CD4-positive, alpha-beta memory T cell (primary cell): ENCODE measurements at regions of chr4 and their contacts with region 1.

Region 1: DNA sequence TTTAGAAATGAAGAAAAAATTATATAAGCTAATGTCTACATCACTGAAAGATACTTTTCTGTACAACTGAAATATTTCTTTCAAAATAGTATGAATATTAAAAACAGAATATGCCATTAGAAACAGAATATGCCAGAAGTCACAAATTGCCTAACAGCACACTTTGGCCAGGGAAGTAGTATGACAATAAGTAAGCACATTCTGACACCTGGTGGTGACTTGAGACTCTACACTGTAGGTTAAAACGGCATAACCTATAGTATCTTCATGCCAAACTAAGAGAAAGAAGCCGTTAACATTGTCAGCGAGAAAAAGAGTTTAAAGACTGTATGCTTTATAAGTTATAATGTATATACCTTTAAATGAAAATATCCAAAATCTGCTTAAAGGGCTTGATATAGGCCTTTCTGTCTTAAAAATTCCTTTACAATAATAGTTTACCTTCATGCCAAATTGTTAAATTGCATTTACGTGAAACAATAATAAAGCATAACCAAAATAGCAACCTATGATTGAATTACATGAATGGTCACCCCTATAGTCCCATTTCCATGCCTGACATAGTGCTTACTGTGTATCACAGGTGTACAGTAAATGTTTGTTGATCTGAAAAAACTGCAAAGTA is 32.8 kb downstream of the FAM13A start:
- DNase-seq: peak; percentile 69 to 75 (median 73)
- H3K4me3 ChIP-seq: no peak overlapping the region
- H3K4me3 Mint-ChIP-seq: no peak overlapping the region
- H3K27ac ChIP-seq: no peak overlapping the region
- H3K27ac Mint-ChIP-seq: peak overlapping the region in 1 of 7 donors; percentile 39
- H3K4me1 ChIP-seq: no peaks in the 10 kb centered on the region
- H3K4me1 Mint-ChIP-seq: peaks cover 0 to 7% (median under 1%) of the 10 kb centered on the region in 4 donors
- H3K27me3 ChIP-seq: no peaks in the 10 kb centered on the region
- H3K27me3 Mint-ChIP-seq: no peaks in the 10 kb centered on the region

Region 2: DNA sequence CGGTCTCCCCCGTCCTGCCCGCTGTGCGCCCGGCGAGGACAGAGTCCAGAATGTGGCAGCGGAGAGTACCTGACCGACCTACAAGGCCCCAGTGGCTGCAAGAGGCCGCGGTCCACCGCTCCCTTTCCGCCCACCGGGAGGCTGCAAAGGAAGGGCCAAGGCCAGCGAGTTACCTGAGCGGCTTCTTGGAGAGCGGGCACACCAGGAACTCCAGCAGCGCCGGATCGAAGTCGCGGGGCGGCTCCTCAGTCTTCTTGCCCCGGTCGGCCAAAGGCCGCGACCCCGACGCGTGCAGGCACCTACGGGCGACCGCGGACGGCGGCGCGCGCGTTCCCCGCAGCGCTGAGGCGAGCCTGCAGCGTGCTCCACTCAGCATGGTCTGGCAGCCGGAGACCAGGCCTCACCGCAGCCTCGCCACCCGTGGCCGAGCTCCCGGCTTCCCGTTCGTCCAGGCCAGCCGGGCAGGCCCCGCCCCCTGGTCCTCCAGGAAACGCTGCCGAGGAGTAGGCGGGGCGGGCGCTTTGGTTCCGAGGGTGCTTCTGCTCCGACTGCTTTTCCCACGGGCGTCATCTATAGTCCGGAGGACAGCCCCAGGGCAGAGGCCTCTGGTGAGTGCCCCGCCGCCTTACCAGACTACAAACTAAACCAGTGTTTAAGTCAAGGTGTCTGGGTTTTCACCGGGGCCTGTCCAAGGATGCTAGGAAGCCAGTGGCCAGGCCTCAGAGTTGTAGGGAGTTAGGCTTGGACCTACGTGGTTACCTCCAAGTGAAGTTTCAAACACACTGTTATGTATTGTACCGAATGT is 500.6 kb before region 1 on chr4 and contains the start of gene PYURF:
- CTCF ChIA-PET with region 1: interaction called, 41 read pairs
- POLR2A ChIA-PET with region 1: no interaction called
- intact Hi-C with region 1: loop called (anchors 1 kb)
- DNase-seq: peak; percentile 60 to 73 (median 64)
- H3K4me3 ChIP-seq: peak within 1 kb of the TSS; percentile 62 to 69
- H3K4me3 Mint-ChIP-seq: peak within 1 kb of the TSS; percentile 91 to 97 (median 94)
- H3K27ac ChIP-seq: peak within 1 kb of the TSS; percentile 60
- H3K27ac Mint-ChIP-seq: peak within 1 kb of the TSS; percentile 89 to 96 (median 93)
- H3K4me1 ChIP-seq: peaks cover 17% of the 10 kb centered on the region
- H3K4me1 Mint-ChIP-seq: peaks cover 22 to 46% (median 32%) of the 10 kb centered on the region in 4 donors
- H3K27me3 ChIP-seq: no peaks in the 10 kb centered on the region
- H3K27me3 Mint-ChIP-seq: no peaks in the 10 kb centered on the region
- total RNA-seq, gene PYURF: 54.5 to 60.4 TPM

Region 3: GRCh38 chr4:88528861-88529260 is 495.3 kb before region 1 on chr4:
- CTCF ChIA-PET with region 1: interaction called, 41 read pairs
- POLR2A ChIA-PET with region 1: no interaction called
- intact Hi-C with region 1: loop called (anchors 1 kb)
- DNase-seq: no peak
- H3K4me3 ChIP-seq: no peak overlapping the region
- H3K4me3 Mint-ChIP-seq: no peak overlapping the region
- H3K27ac ChIP-seq: no peak overlapping the region
- H3K27ac Mint-ChIP-seq: no peak overlapping the region
- H3K4me1 ChIP-seq: peaks cover 4% of the 10 kb centered on the region
- H3K4me1 Mint-ChIP-seq: peaks cover 5 to 23% (median 15%) of the 10 kb centered on the region in 4 donors
- H3K27me3 ChIP-seq: no peaks in the 10 kb centered on the region
- H3K27me3 Mint-ChIP-seq: no peaks in the 10 kb centered on the region

Region 4: DNA sequence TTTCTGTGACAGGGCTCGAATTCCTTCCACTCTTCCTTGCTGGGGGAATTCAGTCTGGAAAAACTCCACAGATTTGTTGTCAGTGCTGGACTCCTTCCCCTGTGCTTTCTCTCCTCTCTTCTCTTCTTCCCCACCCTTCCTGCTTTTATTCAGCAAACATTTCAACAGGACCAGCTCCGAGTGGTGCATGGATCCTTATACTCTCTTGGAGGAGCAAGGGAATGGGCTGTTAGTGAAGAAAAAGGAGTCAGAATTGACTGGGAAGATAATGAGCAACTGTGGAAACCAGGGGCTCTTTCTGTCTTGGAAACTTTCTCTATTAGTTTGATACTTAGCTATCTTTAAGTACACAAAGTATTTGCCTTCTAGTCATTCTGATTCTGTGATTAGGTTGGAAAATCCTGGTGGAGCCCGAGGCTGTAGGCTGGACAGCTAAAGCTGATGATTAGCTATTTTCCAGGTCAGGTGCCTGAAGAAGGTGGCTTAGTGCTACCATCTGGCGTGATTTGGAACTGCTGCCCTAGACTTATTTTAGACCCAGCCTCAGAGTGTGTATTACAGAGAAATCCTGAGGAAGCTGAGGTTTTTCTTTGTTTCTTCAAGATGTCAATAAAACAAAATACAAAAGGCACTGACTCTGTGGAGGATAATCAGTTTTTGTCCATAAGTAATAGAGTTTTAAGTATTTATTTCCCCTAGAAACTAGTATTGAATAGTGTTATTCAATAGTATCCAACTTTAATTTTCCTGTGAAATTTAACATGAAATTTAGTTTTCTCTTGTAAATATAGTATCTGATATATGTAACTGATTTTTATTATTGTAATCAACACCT is 364.9 kb before region 1 on chr4:
- CTCF ChIA-PET with region 1: interaction called, 3 read pairs
- POLR2A ChIA-PET with region 1: no interaction called
- intact Hi-C with region 1: loop called (anchors 5 kb)
- DNase-seq: peak; percentile 32 to 47 (median 41)
- H3K4me3 ChIP-seq: no peak overlapping the region
- H3K4me3 Mint-ChIP-seq: no peak overlapping the region
- H3K27ac ChIP-seq: no peak overlapping the region
- H3K27ac Mint-ChIP-seq: peak overlapping the region in 5 of 7 donors; percentile 2 to 71 (median 55)
- H3K4me1 ChIP-seq: peaks cover 5% of the 10 kb centered on the region
- H3K4me1 Mint-ChIP-seq: peaks cover 6 to 18% (median 9%) of the 10 kb centered on the region in 4 donors
- H3K27me3 ChIP-seq: no peaks in the 10 kb centered on the region
- H3K27me3 Mint-ChIP-seq: no peaks in the 10 kb centered on the region

Region 5: DNA sequence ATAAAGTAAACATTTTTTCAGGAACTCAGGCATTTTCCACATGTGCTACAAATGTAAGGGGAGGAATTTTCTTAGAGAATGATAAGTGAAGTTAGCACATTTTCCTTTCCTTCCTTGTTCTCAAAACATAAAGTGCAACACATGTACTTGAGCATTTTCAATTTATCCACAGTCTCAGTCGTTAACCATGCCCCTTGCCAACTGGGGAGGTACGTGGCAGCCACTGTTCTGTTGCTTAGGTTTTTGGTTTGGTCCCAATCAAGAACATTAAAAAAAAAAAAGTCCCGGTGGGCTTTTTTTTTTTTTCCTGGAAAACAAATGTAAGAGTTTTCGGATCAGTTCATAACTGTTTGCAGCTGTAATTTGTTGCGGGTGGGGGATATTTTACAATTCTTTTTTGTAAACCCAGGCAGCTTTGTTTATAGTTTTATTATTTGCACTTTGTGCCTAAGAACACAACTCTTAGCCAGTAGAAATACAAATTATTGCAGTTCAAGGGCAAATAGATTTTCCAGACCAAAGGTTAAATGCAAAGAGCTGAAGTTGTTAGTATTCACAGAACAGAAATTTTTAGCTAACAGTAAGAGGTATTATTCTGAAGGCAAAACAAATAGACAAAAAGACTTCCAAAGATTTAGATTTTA is 214.5 kb before region 1 on chr4:
- CTCF ChIA-PET with region 1: interaction called, 394 read pairs
- POLR2A ChIA-PET with region 1: no interaction called
- intact Hi-C with region 1: no loop called
- DNase-seq: no peak
- H3K4me3 ChIP-seq: no peak overlapping the region
- H3K4me3 Mint-ChIP-seq: peak overlapping the region in 1 of 8 donors; percentile 9
- H3K27ac ChIP-seq: no peak overlapping the region
- H3K27ac Mint-ChIP-seq: peak overlapping the region in 1 of 7 donors; percentile 14
- H3K4me1 ChIP-seq: no peaks in the 10 kb centered on the region
- H3K4me1 Mint-ChIP-seq: peaks cover 0 to 15% (median under 1%) of the 10 kb centered on the region in 4 donors
- H3K27me3 ChIP-seq: no peaks in the 10 kb centered on the region
- H3K27me3 Mint-ChIP-seq: no peaks in the 10 kb centered on the region

Region 6: GRCh38 chr4:88828842-88829571 is 195.2 kb before region 1 on chr4:
- CTCF ChIA-PET with region 1: interaction called, 18 read pairs
- POLR2A ChIA-PET with region 1: interaction called, 6 read pairs
- intact Hi-C with region 1: no loop called
- DNase-seq: no peak
- H3K4me3 ChIP-seq: no peak overlapping the region
- H3K4me3 Mint-ChIP-seq: no peak overlapping the region
- H3K27ac ChIP-seq: no peak overlapping the region
- H3K27ac Mint-ChIP-seq: no peak overlapping the region
- H3K4me1 ChIP-seq: peaks cover 4% of the 10 kb centered on the region
- H3K4me1 Mint-ChIP-seq: peaks cover 0 to 1% (median 0%) of the 10 kb centered on the region in 4 donors
- H3K27me3 ChIP-seq: no peaks in the 10 kb centered on the region
- H3K27me3 Mint-ChIP-seq: peaks cover 0 to 2% of the 10 kb centered on the region in 2 donors

Region 7: GRCh38 chr4:89039730-89040338 is 15.7 kb after region 1 on chr4:
- CTCF ChIA-PET with region 1: interaction called, 10 read pairs
- POLR2A ChIA-PET with region 1: no interaction called
- intact Hi-C with region 1: no loop called
- DNase-seq: no peak
- H3K4me3 ChIP-seq: no peak overlapping the region
- H3K4me3 Mint-ChIP-seq: no peak overlapping the region
- H3K27ac ChIP-seq: no peak overlapping the region
- H3K27ac Mint-ChIP-seq: no peak overlapping the region
- H3K4me1 ChIP-seq: no peaks in the 10 kb centered on the region
- H3K4me1 Mint-ChIP-seq: no peaks in the 10 kb centered on the region
- H3K27me3 ChIP-seq: no peaks in the 10 kb centered on the region
- H3K27me3 Mint-ChIP-seq: peaks cover 0 to 6% of the 10 kb centered on the region in 2 donors

Region 8: GRCh38 chr4:89914609-89915550 is 890.7 kb after region 1 on chr4:
- CTCF ChIA-PET with region 1: no interaction called
- POLR2A ChIA-PET with region 1: no interaction called
- intact Hi-C with region 1: no loop called
- DNase-seq: no peak
- H3K4me3 ChIP-seq: no peak overlapping the region
- H3K4me3 Mint-ChIP-seq: no peak overlapping the region
- H3K27ac ChIP-seq: no peak overlapping the region
- H3K27ac Mint-ChIP-seq: no peak overlapping the region
- H3K4me1 ChIP-seq: no peaks in the 10 kb centered on the region
- H3K4me1 Mint-ChIP-seq: peaks cover 0 to 3% (median under 1%) of the 10 kb centered on the region in 4 donors
- H3K27me3 ChIP-seq: no peaks in the 10 kb centered on the region
- H3K27me3 Mint-ChIP-seq: no peaks in the 10 kb centered on the region